CD8-positive, alpha-beta T cell (primary cell): ENCODE measurements at regions of chr5 and their contacts with region 1.

Region 1: GRCh38 chr5:73565139-73565968 is at the starts of genes ANKRA2 and UTP15:
- DNase-seq: peak; percentile 97 to 100 (median 99)
- ATAC-seq: peak; percentile 96
- H3K4me3 ChIP-seq: peak within 1 kb of the TSS; percentile 72 to 81
- H3K4me3 Mint-ChIP-seq: peak within 1 kb of the TSS; percentile 100
- H3K27ac ChIP-seq: peak within 1 kb of the TSS; percentile 94 to 95
- H3K27ac Mint-ChIP-seq: peak within 1 kb of the TSS; percentile 100
- H3K4me1 ChIP-seq: peaks cover 26% of the 10 kb centered on the region
- H3K4me1 Mint-ChIP-seq: peaks cover 58% of the 10 kb centered on the region
- H3K27me3 ChIP-seq: no peaks in the 10 kb centered on the region
- H3K27me3 Mint-ChIP-seq: no peaks in the 10 kb centered on the region
- CTCF ChIP-seq: no peak
- total RNA-seq, gene ANKRA2: 43.4 to 44.1 TPM
- total RNA-seq, gene UTP15: 60.9 to 69.1 TPM

Region 2: DNA sequence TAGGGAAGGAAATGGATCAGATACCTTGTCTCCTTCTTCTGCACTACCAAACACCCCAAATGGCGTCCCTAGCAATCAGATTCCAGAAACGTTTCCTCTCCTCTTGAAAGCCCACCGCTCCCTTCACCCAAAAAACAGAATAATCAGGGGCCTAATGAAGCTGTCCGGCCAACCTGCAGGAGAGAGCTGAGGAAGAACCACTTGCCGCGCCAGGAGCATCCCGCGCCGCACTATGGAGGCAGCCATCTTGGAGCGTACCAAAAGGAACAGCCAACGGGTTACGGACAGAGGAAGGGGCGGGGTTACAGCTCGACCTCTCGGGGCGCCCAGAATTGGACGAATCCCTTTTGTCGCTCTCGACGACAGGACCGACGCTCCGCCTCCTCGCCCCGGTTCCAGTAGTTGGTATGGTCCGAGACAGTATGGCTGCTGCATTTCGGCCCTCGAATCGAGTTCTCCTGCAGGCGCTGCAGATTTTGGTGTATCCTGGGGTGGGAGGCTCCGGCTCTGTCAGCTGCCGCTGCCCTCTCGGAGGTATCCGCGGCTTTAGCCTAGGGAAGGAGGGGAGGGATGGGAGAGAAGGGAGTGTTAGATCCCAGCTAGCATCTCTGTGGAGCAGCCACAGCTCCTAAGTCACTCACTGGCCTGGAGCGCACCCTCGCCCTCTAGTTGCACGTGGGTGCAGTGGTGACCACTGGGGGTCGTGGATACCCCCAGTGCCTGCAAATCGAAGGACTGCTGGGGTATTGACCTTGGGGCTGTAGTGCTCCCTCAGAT is 1245.2 kb before region 1 on chr5 and contains the starts of genes MRPS27 and PTCD2:
- CTCF ChIA-PET with region 1: no interaction called
- POLR2A ChIA-PET with region 1: no interaction called
- intact Hi-C with region 1: loop called (anchors 2 kb)
- DNase-seq: peak; percentile 88 to 99 (median 92)
- ATAC-seq: peak; percentile 99
- H3K4me3 ChIP-seq: peak within 1 kb of the TSS; percentile 73 to 95
- H3K4me3 Mint-ChIP-seq: peak within 1 kb of the TSS; percentile 97
- H3K27ac ChIP-seq: peak within 1 kb of the TSS; percentile 57 to 73
- H3K27ac Mint-ChIP-seq: peak within 1 kb of the TSS; percentile 96
- H3K4me1 ChIP-seq: peaks cover 10% of the 10 kb centered on the region
- H3K4me1 Mint-ChIP-seq: peaks cover 39% of the 10 kb centered on the region
- H3K27me3 ChIP-seq: no peaks in the 10 kb centered on the region
- H3K27me3 Mint-ChIP-seq: no peaks in the 10 kb centered on the region
- CTCF ChIP-seq: no peak
- total RNA-seq, gene MRPS27: 24.1 to 27.3 TPM
- total RNA-seq, gene PTCD2: 3.7 TPM

Region 3: GRCh38 chr5:72955768-72956323 is 609.5 kb before region 1 on chr5 and contains the start of gene FCHO2:
- CTCF ChIA-PET with region 1: no interaction called
- POLR2A ChIA-PET with region 1: no interaction called
- intact Hi-C with region 1: loop called in 1 of 2 experiments (anchors 2 kb)
- DNase-seq: peak; percentile 88 to 98 (median 96)
- ATAC-seq: peak; percentile 90
- H3K4me3 ChIP-seq: peak within 1 kb of the TSS; percentile 61 to 95
- H3K4me3 Mint-ChIP-seq: peak within 1 kb of the TSS; percentile 95
- H3K27ac ChIP-seq: no peak within 1 kb of the TSS
- H3K27ac Mint-ChIP-seq: peak within 1 kb of the TSS; percentile 88
- H3K4me1 ChIP-seq: peaks cover 12% of the 10 kb centered on the region
- H3K4me1 Mint-ChIP-seq: peaks cover 15% of the 10 kb centered on the region
- H3K27me3 ChIP-seq: peaks cover 6 to 9% of the 10 kb centered on the region in 2 experiments
- H3K27me3 Mint-ChIP-seq: peaks cover 41% of the 10 kb centered on the region
- CTCF ChIP-seq: peak; percentile 65
- total RNA-seq, gene FCHO2: 2.4 to 2.9 TPM

Region 4: GRCh38 chr5:75336625-75337339 is 1771.4 kb after region 1 on chr5 and contains the start of gene HMGCR:
- CTCF ChIA-PET with region 1: no interaction called
- POLR2A ChIA-PET with region 1: no interaction called
- intact Hi-C with region 1: loop called (anchors 5 to 10 kb)
- DNase-seq: peak; percentile 93 to 99 (median 97)
- ATAC-seq: peak; percentile 92
- H3K4me3 ChIP-seq: peak within 1 kb of the TSS; percentile 72 to 96
- H3K4me3 Mint-ChIP-seq: no peak within 1 kb of the TSS
- H3K27ac ChIP-seq: peak within 1 kb of the TSS; percentile 87 to 92
- H3K27ac Mint-ChIP-seq: no peak within 1 kb of the TSS
- H3K4me1 ChIP-seq: peaks cover 18% of the 10 kb centered on the region
- H3K4me1 Mint-ChIP-seq: peaks cover 35% of the 10 kb centered on the region
- H3K27me3 ChIP-seq: no peaks in the 10 kb centered on the region
- H3K27me3 Mint-ChIP-seq: no peaks in the 10 kb centered on the region
- CTCF ChIP-seq: no peak
- total RNA-seq, gene HMGCR: 72.8 to 73.3 TPM